IMR-90 (cell line): ENCODE measurements at regions of chr1 and their contacts with region 1.

Region 1: DNA sequence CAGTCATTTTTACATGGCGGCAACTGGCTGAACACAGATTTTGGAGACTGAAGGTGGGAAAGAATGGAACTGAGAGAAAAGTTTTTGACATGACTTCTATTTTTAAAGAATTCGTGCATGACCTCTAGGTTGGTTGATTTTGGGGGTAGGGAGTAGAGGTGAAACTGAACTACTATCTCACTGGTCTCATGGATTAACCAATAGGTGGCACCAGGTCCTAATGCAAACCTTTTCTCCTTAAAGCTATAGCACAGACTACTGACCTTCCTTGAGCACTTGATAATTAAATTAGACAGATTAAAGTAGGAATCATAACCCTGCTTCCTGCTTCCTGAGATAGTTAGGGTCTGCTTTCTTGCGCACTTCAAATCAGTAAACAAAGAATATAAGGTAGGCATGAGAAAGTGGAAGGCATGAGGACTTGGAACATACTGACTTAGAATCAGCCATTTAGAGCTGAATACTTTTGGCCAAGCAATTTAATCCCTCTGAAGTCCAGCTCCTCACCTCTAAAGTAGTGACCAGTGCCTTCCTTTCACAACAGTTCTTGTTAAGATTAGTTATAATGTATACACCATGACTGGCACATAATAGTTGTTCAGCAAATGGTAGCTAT is 206.0 kb downstream of the CENPF start:
- DNase-seq: peak; percentile 62
- ATAC-seq: peak; percentile 74
- H3K4me3 ChIP-seq: no peak overlapping the region
- H3K27ac ChIP-seq: no peak overlapping the region
- H3K4me1 ChIP-seq: peaks cover 1% of the 10 kb centered on the region; the same call in 1 of the 2 replicates
- H3K27me3 ChIP-seq: no peaks in the 10 kb centered on the region
- CTCF ChIP-seq: peak; percentile 57
- POLR2A ChIP-seq: no peak
- RAD21 ChIP-seq: peak; percentile 80

Region 2: DNA sequence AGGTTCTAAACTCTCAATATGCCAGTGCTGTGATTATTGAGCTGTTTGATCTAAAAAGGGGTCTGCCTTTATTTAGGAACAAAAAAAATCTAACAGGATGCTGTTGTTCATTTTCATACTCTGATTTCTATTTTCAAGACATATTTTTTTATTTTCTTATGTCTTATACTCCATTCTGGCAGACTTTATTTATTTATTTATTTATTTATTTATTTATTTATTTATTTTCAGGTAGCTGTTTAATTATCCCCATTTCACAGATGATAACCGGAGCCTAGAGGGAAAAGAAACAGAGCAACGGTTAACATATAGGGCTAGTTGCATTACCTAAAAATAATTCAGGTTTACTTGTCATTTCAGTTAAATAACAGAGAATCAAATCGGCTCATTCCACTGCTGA is 31.6 kb before region 1 on chr1:
- CTCF ChIA-PET with region 1: no interaction called
- POLR2A ChIA-PET with region 1: no interaction called
- dilution Hi-C with region 1: no loop called
- in situ Hi-C with region 1: no loop called
- intact Hi-C with region 1: no loop called
- DNase-seq: no peak
- ATAC-seq: no peak
- H3K4me3 ChIP-seq: no peak overlapping the region
- H3K27ac ChIP-seq: no peak overlapping the region
- H3K4me1 ChIP-seq: no peaks in the 10 kb centered on the region
- H3K27me3 ChIP-seq: no peaks in the 10 kb centered on the region
- CTCF ChIP-seq: no peak
- POLR2A ChIP-seq: no peak
- RAD21 ChIP-seq: no peak

Region 3: GRCh38 chr1:215005078-215005477 is 196.1 kb after region 1 on chr1:
- CTCF ChIA-PET with region 1: no interaction called
- POLR2A ChIA-PET with region 1: no interaction called
- dilution Hi-C with region 1: no loop called
- in situ Hi-C with region 1: no loop called
- intact Hi-C with region 1: no loop called
- DNase-seq: peak; percentile 45
- ATAC-seq: no peak
- H3K4me3 ChIP-seq: no peak overlapping the region
- H3K27ac ChIP-seq: no peak overlapping the region
- H3K4me1 ChIP-seq: peaks cover 2% of the 10 kb centered on the region; the same call in 1 of the 2 replicates
- H3K27me3 ChIP-seq: no peaks in the 10 kb centered on the region
- CTCF ChIP-seq: no peak
- POLR2A ChIP-seq: no peak
- RAD21 ChIP-seq: no peak

Region 4: GRCh38 chr1:215082532-215083382 is 273.8 kb after region 1 on chr1 and contains the start of gene KCNK2:
- CTCF ChIA-PET with region 1: no interaction called
- POLR2A ChIA-PET with region 1: no interaction called
- dilution Hi-C with region 1: no loop called
- in situ Hi-C with region 1: no loop called
- intact Hi-C with region 1: loop called (anchors 2 kb)
- DNase-seq: peak; percentile 52
- ATAC-seq: peak; percentile 76
- H3K4me3 ChIP-seq: peak within 1 kb of the TSS; percentile 85
- H3K27ac ChIP-seq: peak within 1 kb of the TSS; percentile 39; the same call in 1 of the 2 replicates
- H3K4me1 ChIP-seq: peaks cover 2% of the 10 kb centered on the region; the same call in 1 of the 2 replicates
- H3K27me3 ChIP-seq: peaks cover 4% of the 10 kb centered on the region; the same call in 1 of the 2 replicates
- CTCF ChIP-seq: no peak
- POLR2A ChIP-seq: no peak
- RAD21 ChIP-seq: no peak
- total RNA-seq, gene KCNK2: 86.9 TPM in 2 replicates

Region 5: GRCh38 chr1:215146341-215146826 is 337.4 kb after region 1 on chr1:
- CTCF ChIA-PET with region 1: interaction called, 9 read pairs
- POLR2A ChIA-PET with region 1: no interaction called
- dilution Hi-C with region 1: no loop called
- in situ Hi-C with region 1: no loop called
- intact Hi-C with region 1: loop called (anchors 1 kb)
- DNase-seq: peak; percentile 64
- ATAC-seq: no peak
- H3K4me3 ChIP-seq: no peak overlapping the region
- H3K27ac ChIP-seq: no peak overlapping the region
- H3K4me1 ChIP-seq: no peaks in the 10 kb centered on the region
- H3K27me3 ChIP-seq: no peaks in the 10 kb centered on the region
- CTCF ChIP-seq: peak; percentile 74
- POLR2A ChIP-seq: no peak
- RAD21 ChIP-seq: peak; percentile 76

Region 6: GRCh38 chr1:215517441-215517891 is 708.5 kb after region 1 on chr1:
- CTCF ChIA-PET with region 1: interaction called, 4 read pairs
- POLR2A ChIA-PET with region 1: no interaction called
- dilution Hi-C with region 1: no loop called
- in situ Hi-C with region 1: loop called (anchors 5 kb)
- intact Hi-C with region 1: loop called (anchors 2 kb)
- DNase-seq: peak; percentile 91
- ATAC-seq: peak; percentile 88
- H3K4me3 ChIP-seq: no peak overlapping the region
- H3K27ac ChIP-seq: peak overlapping the region; percentile 85
- H3K4me1 ChIP-seq: peaks cover 3% of the 10 kb centered on the region
- H3K27me3 ChIP-seq: no peaks in the 10 kb centered on the region
- CTCF ChIP-seq: peak; percentile 47
- POLR2A ChIP-seq: no peak
- RAD21 ChIP-seq: peak; percentile 62